ENCODE measurements at regions of chr11 and their contacts with region 1.

Region 1: DNA sequence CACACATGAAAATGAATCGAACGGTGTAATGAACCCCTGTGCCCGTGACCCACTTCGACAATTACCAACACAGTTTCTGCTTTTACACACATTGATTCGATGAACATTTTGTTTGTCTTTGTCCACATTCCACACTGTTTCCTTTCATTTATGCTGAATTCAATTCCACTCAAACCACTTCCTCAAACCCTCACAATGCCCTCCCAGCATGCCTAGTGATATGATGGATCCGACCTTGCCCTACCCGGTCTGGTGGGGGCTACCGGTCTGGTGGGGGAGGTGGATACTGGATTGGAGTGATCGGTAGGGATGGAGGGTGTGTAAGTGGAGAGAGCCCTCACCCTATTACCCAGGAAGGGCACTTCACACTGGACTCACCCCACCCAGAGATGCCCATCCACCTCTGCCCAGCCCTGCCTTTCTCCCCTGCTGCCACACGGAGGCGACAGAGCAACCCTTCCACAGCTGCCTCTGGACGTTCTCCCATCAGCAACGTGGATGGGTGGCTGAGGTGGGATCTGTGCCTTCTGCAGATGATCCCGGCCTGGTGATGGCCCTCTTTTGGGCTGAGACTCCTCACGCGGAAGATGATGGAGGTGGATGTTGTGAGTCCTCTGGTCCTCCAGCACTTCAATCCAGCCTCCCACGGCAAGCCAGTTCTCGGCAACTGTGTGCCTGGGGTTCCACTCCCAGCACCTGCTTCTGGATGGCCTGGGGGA is 33.0 kb upstream of the P2RY2 start:
- DNase-seq: peak in 7 of 9 donors; percentile 9 to 56 (median 31)
- ATAC-seq: peak; percentile 79
- H3K4me3 ChIP-seq: no peak overlapping the region
- H3K4me3 Mint-ChIP-seq: peak overlapping the region in 1 of 10 donors; percentile 20
- H3K27ac ChIP-seq: no peak overlapping the region
- H3K27ac Mint-ChIP-seq: no peak overlapping the region
- H3K4me1 ChIP-seq: no peaks in the 10 kb centered on the region
- H3K4me1 Mint-ChIP-seq: peaks cover 0 to 8% (median 4%) of the 10 kb centered on the region in 7 donors
- H3K27me3 ChIP-seq: peaks cover 0 to 2% of the 10 kb centered on the region in 2 donors
- H3K27me3 Mint-ChIP-seq: peaks cover 0 to 30% (median 15%) of the 10 kb centered on the region in 5 donors

Region 2: DNA sequence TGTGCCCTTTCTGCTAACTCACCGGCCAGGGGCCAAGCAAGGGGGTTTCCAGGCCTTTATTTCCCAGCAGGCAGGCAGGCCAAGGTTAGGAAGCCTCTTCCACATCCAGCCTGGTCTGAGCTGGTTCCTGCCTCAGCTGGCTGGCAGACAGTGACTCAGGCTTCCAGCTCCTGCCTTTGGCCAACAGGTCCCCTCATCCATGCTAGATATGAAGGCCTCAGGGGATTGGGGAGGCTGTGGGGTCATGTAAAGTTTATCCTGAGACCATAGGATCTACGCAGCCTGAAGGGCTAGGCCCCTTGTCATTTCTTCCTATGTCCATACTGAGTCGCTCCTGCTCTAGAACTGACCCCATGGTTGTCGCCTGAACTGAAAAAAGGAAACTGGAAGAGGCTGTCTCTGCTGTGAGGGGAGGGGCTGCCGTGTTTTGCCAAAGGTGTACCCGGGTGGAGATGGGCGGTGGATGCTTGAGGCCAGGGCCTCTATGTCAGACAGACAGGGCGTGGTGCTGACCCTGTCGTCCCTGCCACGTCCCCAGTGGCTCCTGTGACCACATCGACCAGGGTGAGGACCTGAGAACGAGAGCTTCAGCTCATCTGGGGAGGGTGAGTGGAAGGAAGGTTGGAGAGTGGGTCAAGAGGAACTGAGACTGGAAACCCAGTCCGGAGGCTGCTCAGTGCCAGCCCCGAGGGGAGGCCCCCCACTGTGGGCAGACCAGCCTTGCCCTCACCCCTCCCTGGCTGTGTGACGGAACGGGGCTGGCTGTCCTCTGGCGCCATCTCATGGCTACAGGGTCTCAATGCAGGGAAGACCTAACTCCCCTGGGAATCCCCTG is 104.0 kb after region 1 on chr11:
- CTCF ChIA-PET with region 1: no interaction called
- POLR2A ChIA-PET with region 1: no interaction called
- intact Hi-C with region 1: loop called in 1 of 2 experiments (anchors 1 kb)
- DNase-seq: peak in 8 of 9 donors; percentile 20 to 60 (median 36)
- ATAC-seq: peak; percentile 88
- H3K4me3 ChIP-seq: no peak overlapping the region
- H3K4me3 Mint-ChIP-seq: peak overlapping the region in 5 of 10 donors; percentile 14 to 64 (median 22)
- H3K27ac ChIP-seq: no peak overlapping the region
- H3K27ac Mint-ChIP-seq: peak overlapping the region in 1 of 9 donors; percentile 46
- H3K4me1 ChIP-seq: peaks cover 0 to 4% of the 10 kb centered on the region in 2 donors
- H3K4me1 Mint-ChIP-seq: peaks cover 0 to 26% (median 9%) of the 10 kb centered on the region in 7 donors
- H3K27me3 ChIP-seq: no peaks in the 10 kb centered on the region
- H3K27me3 Mint-ChIP-seq: peaks cover 0 to 9% (median 4%) of the 10 kb centered on the region in 5 donors